ENCODE measurements at regions of chr17 and their contacts with region 1.

Region 1: DNA sequence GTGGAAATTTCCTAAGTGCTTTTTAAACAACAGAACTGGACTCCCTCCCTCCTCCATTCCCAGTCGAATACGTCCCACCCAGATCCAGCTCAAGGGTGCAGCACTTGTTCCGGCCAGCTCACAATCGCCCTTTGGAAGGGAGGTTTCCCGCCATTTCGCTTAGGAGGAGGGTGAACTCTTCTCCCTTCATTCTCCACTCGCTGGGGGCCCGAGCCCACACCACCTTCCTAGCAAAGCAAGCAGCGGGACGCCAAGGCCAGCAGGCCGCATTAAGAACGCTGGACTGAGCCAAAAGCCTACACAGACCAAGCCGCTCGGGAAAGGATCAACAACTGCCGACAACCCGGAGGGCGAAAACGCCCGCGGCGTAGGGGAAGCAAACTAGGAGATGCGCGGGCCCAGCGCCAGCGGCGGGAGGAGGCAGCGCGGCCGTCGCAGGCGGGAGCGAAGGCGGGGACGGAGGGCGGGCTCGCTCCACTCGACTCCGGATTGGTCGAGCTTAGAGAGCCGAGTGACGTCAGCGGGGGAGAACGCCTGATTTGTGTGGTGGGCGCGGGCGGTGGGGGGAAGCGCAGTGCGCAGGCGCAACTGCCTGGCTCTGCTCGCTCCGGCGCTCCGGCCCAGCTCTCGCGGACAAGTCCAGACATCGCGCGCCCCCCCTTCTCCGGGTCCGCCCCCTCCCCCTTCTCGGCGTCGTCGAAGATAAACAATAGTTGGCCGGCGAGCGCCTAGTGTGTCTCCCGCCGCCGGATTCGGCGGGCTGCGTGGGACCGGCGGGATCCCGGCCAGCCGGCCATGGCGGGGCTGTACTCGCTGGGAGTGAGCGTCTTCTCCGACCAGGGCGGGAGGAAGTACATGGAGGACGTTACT is at the start of gene PPM1D:
- DNase-seq: peak; percentile 100
- ATAC-seq: peak; percentile 98 to 99
- H3K4me3 ChIP-seq: peak within 1 kb of the TSS; percentile 95
- H3K27ac ChIP-seq: peak within 1 kb of the TSS; percentile 98
- H3K4me1 ChIP-seq: peaks cover 3% of the 10 kb centered on the region
- H3K27me3 ChIP-seq: no peaks in the 10 kb centered on the region
- total RNA-seq, gene PPM1D: 7.5 to 10.0 (median 8.9) TPM

Region 2: DNA sequence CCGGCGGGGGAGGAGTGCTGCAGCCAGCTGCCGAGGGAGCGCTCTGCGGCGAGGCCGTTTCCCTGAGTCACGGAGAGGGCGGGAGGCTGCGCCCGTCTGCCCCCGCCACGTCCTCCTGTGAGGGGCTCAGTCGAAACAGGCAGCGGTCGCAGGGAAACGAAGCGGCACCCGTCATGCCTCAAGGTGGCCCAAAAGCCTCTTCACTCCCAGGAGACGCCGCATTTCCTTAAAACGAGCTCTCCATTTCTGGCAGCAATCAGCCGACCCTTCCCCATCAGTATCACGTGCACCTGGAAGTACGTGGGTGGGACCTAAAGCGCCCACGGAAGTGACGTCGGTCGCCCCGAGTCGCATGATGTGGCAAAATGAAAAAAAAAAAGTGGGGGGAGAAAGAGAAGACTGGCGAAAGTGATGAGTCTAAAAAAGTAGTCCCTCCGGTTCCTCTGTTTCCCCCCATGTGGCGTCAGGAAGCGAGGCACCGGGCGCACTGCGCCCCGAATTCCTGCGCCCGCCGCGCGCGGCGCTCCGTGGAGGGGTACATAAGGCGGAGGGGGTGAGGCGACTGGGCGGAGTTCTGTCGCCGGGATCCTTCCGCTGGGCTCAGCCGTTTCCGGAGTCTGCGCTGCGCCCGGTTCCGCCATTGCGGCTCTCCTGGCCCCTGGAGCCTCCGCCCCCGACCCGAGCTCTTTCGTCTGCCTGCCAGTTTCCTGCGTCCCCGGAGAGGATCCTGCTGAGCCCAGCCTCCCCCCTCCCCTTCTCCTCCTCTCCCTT is 980.4 kb before region 1 on chr17 and contains the start of gene CLTC:
- intact Hi-C with region 1: loop called in 1 of 4 experiments (anchors 10 kb)
- DNase-seq: peak; percentile 94 to 97 (median 96)
- ATAC-seq: peak; percentile 96
- H3K4me3 ChIP-seq: peak within 1 kb of the TSS; percentile 92
- H3K27ac ChIP-seq: peak within 1 kb of the TSS; percentile 97
- H3K4me1 ChIP-seq: peaks cover 2% of the 10 kb centered on the region
- H3K27me3 ChIP-seq: no peaks in the 10 kb centered on the region
- total RNA-seq, gene CLTC: 141 to 203 (median 186) TPM

Region 3: GRCh38 chr17:60435244-60436167 is 164.3 kb before region 1 on chr17:
- intact Hi-C with region 1: no loop called
- DNase-seq: peak; percentile 71 to 89 (median 89)
- ATAC-seq: peak; percentile 91 to 95
- H3K4me3 ChIP-seq: no peak overlapping the region
- H3K27ac ChIP-seq: no peak overlapping the region
- H3K4me1 ChIP-seq: no peaks in the 10 kb centered on the region
- H3K27me3 ChIP-seq: no peaks in the 10 kb centered on the region

Region 4: DNA sequence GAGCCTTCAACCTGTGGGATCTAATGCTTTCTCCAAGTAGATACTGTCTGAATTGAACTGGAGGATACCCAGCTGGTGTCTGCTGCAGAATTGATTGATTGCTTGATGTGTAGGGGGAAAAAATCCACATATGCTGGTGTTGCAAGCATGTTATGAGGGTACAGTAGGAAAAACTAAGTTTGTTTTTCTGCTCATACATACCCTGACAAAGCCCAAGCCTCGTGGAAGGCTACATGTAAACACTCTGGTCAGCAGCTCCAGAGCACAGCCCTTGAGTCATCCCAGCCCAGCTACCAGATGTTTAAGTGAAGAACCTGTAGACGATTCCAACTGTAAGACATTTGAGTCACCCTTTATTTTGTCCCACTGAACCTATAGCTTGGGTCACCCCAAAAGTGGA is 64.4 kb before region 1 on chr17:
- intact Hi-C with region 1: no loop called
- DNase-seq: no peak
- ATAC-seq: no peak
- H3K4me3 ChIP-seq: no peak overlapping the region
- H3K27ac ChIP-seq: no peak overlapping the region
- H3K4me1 ChIP-seq: no peaks in the 10 kb centered on the region
- H3K27me3 ChIP-seq: no peaks in the 10 kb centered on the region

Measured in right cardiac atrium (tissue), 5 donors.